ENCODE measurements at regions of chr18 and their contacts with region 1.

Region 1: GRCh38 chr18:61322265-61322873 is 10.9 kb upstream of the CDH20 start:
- DNase-seq: peak; percentile 54
- ATAC-seq: peak; percentile 74
- H3K4me3 Mint-ChIP-seq: no peak overlapping the region
- H3K27ac Mint-ChIP-seq: no peak overlapping the region
- H3K4me1 Mint-ChIP-seq: no peaks in the 10 kb centered on the region
- H3K27me3 Mint-ChIP-seq: no peaks in the 10 kb centered on the region

Region 2: GRCh38 chr18:61502472-61502871 is 180.1 kb after region 1 on chr18:
- CTCF ChIA-PET with region 1: interaction called, 33 read pairs
- POLR2A ChIA-PET with region 1: no interaction called
- DNase-seq: no peak
- ATAC-seq: no peak
- H3K4me3 Mint-ChIP-seq: no peak overlapping the region
- H3K27ac Mint-ChIP-seq: no peak overlapping the region
- H3K4me1 Mint-ChIP-seq: no peaks in the 10 kb centered on the region
- H3K27me3 Mint-ChIP-seq: peaks cover 2% of the 10 kb centered on the region

Measured in activated CD8-positive, alpha-beta T cell treated with anti-CD3 and anti-CD28 coated beads, Interleukin-2, amount 10 ng/mL, durations not matched to agents 7 days and 5 days (primary cell).